Esophagus muscularis mucosa (tissue), 4 donors: ENCODE measurements at regions of chr15 and their contacts with region 1.

Region 1: DNA sequence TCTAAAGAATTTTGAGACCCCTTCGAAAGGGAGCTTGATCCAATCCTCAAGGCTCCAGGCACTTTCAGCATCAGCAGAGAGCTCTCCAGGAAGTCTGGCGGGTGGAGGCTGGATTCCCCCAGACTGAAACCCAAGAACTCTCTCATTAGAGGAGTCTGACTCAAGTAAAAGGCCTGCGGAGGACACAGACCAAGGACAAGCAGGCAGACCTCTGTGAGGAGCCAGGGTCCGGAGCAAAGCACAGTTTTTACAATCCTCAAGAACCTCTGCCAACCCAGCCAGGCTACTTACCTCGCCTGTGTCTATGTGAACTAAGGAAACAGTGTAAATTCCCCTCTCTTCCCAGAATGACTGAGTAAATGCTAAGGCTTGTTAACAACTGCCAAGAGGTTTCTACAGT is 86.2 kb downstream of the FBN1 start:
- DNase-seq: no peak
- H3K4me3 ChIP-seq: peak overlapping the region in 3 of 4 donors; percentile 5 to 32 (median 6)
- H3K27ac ChIP-seq: peak overlapping the region; percentile 77 to 81 (median 80)
- H3K4me1 ChIP-seq: peaks cover 26 to 90% (median 86%) of the 10 kb centered on the region in 4 donors
- H3K27me3 ChIP-seq: no peaks in the 10 kb centered on the region
- CTCF ChIP-seq: no peak
- EP300 ChIP-seq: no peak
- POLR2A ChIP-seq: no peak

Region 2: GRCh38 chr15:48617619-48618018 is 58.3 kb after region 1 on chr15:
- intact Hi-C with region 1: loop called (anchors 5 kb)
- DNase-seq: no peak
- H3K4me3 ChIP-seq: no peak overlapping the region
- H3K27ac ChIP-seq: peak overlapping the region; percentile 66 to 78 (median 74)
- H3K4me1 ChIP-seq: peaks cover 4 to 90% (median 80%) of the 10 kb centered on the region in 4 donors
- H3K27me3 ChIP-seq: no peaks in the 10 kb centered on the region
- CTCF ChIP-seq: no peak
- EP300 ChIP-seq: no peak
- POLR2A ChIP-seq: no peak